ENCODE measurements at regions of chr2 and their contacts with region 1.

Region 1: DNA sequence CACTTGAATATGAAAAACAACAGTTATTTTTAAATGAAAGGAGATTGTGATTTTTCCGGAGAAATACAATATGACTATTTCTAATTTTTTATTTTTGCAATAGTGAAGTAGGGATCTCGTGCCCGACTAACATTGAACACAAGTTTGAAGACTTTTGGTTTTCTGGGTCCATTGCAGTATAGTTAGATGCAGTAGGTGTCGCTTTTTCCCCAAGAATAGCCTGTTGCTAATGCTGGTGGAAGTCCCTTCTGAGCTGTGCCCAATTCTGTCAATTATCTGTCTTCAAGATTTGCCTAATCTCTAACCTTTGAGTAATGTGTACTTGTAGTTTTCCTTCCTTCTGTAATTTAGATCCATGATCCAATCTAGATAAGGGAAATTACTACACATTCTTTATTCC is 36.5 kb downstream of the SEMA4F start:
- DNase-seq: peak; percentile 79
- H3K4me3 Mint-ChIP-seq: no peak overlapping the region
- H3K27ac Mint-ChIP-seq: no peak overlapping the region
- H3K4me1 Mint-ChIP-seq: no peaks in the 10 kb centered on the region
- H3K27me3 Mint-ChIP-seq: peaks cover 23% of the 10 kb centered on the region

Region 2: GRCh38 chr2:74740389-74741075 is 50.0 kb after region 1 on chr2:
- intact Hi-C with region 1: no loop called
- DNase-seq: peak; percentile 37
- H3K4me3 Mint-ChIP-seq: no peak overlapping the region
- H3K27ac Mint-ChIP-seq: no peak overlapping the region
- H3K4me1 Mint-ChIP-seq: peaks cover 1% of the 10 kb centered on the region
- H3K27me3 Mint-ChIP-seq: peaks cover 5% of the 10 kb centered on the region

Region 3: GRCh38 chr2:74876081-74876886 is 185.7 kb after region 1 on chr2:
- intact Hi-C with region 1: loop called (anchors 1 kb)
- DNase-seq: peak; percentile 86
- H3K4me3 Mint-ChIP-seq: no peak overlapping the region
- H3K27ac Mint-ChIP-seq: peak overlapping the region; percentile 42
- H3K4me1 Mint-ChIP-seq: peaks cover 2% of the 10 kb centered on the region
- H3K27me3 Mint-ChIP-seq: no peaks in the 10 kb centered on the region

Region 4: GRCh38 chr2:75403991-75404428 is 713.4 kb after region 1 on chr2:
- intact Hi-C with region 1: loop called (anchors 5 kb)
- DNase-seq: no peak
- H3K4me3 Mint-ChIP-seq: no peak overlapping the region
- H3K27ac Mint-ChIP-seq: no peak overlapping the region
- H3K4me1 Mint-ChIP-seq: no peaks in the 10 kb centered on the region
- H3K27me3 Mint-ChIP-seq: peaks cover 10% of the 10 kb centered on the region